Right ventricle myocardium superior (tissue), 1 donor: ENCODE measurements at regions of chr21 and their contacts with region 1.

Region 1: GRCh38 chr21:15483138-15483780 is 246.5 kb upstream of the USP25 start:
- DNase-seq: peak; percentile 88
- ATAC-seq: peak; percentile 100

Region 2: GRCh38 chr21:14864211-14865021 is 618.8 kb before region 1 on chr21:
- intact Hi-C with region 1: loop called (anchors 2 kb)
- DNase-seq: peak; percentile 79
- ATAC-seq: peak; percentile 94

Region 3: DNA sequence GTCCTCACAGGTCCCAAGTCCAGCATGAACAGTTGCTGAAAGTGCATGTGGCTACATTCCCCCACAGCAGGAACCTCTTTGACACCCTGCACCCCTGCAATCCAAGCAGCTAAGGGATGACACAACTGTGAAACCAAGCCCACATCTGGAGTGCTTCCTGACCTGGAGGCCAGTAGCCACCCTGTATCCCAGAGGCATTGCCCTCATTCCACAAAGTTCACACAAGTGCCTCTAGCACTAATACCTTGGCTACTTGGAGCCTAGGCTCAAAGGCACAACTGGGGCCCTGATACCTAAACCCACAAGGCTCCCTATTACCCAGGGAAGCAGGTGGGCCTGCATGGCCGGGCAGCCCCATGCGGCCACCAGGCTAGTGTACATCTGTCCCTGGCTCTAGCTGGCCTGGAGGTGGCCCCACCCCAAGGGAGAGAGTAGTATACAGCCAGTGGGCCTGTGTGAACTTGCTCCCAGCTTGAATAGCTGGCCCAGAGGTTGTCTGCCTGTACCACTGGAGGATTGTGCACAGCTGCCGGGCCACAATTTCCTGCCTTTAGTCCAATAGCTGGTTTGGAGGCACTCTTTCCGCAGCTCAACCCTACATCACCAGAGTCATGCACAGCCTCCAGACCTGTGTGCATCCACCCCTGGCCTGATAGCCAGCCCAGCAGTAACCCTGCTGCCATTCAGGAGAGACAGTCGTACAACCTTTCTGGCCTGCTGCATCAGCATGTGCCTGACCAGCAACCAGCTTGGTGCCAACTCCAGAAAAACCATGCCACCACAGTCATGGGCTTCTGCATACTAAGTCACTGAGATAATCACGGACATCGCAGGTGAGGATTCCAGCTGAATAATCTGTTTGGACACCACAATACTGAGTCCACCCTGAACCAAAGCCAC is 298.8 kb after region 1 on chr21:
- intact Hi-C with region 1: no loop called
- DNase-seq: peak; percentile 24
- ATAC-seq: no peak

Region 4: DNA sequence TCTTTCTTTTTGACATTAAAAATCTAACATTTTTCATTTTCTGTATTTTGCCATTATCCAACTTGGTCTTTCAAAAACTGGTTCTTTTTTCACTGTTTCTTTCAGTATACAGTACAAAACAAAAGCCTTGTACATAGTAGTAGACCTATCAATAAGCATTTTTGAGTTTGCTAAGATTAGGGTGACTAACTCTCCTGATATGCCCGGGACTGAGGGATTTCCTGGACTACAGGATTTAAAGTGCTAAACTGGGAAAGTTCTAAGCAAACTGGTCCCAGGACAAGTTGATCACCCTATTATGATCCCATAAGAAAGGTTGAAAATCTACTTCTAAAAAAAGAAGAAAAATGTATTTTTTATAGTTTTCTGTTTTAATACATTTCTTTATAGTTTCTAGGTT is 367.4 kb after region 1 on chr21:
- intact Hi-C with region 1: no loop called
- DNase-seq: no peak
- ATAC-seq: no peak